Gastrocnemius medialis (tissue), 4 donors: ENCODE measurements at regions of chr1 and their contacts with region 1.

Region 1: DNA sequence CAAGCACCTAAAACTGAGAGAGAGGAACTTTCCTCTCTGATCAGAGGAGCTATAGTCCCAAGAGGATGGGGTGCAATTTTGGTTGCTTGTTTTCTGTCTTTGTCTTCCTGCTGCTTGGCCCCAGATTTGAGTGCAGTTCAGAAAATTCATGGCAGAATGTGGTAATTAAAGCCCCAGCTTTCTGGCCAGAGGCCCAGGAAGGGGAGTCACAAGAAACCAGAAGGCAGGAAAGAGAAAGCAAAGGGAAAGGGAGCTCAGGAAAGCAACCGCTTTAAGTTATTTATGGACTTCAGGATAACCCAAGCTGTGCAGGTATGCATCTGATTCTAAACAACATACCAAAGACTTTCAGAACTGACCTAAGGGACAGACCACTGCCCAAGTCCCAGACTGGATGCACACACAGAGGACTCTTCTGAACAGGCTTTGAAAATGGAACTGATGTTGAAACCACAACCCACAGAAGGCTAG is 88.8 kb downstream of the ST3GAL3 start:
- DNase-seq: no peak
- ATAC-seq: no peak
- H3K4me3 ChIP-seq: no peak overlapping the region
- H3K27ac ChIP-seq: no peak overlapping the region
- H3K4me1 ChIP-seq: no peaks in the 10 kb centered on the region
- H3K27me3 ChIP-seq: no peaks in the 10 kb centered on the region
- CTCF ChIP-seq: no peak
- POLR2A ChIP-seq: no peak

Region 2: DNA sequence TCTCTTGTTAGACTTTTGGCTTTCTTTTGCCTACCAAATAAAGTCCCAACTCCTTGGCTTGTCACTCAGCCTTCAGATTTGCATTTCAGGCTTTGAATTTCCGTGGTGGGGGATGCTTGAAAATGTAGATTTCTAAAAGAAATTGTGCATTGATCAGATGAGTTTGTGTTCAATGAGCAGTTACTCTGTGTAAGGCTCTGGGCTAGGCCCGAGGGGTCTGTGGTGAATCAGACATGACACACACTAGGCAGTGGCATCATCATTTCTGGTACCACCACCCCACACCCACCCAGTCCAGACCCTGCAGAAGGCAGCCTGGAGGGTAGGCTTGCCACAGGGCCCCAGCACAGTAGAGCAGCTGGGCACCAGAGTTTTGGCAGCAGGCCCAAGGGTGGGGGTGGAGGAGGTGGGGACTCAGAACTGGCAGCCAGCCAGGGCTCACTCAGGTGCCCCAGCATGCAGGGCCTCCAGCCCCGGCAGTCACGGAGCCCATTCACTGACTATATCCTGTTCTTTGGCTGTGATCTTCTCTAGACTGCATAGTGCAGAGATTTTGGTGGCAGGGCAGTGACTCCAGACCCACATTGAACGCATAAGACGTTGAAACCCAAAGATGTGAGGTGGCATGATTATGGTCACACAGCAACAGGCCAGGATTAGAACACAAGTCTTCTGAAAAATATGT is 40.3 kb after region 1 on chr1:
- in situ Hi-C with region 1: no loop called
- intact Hi-C with region 1: loop called (anchors 5 kb)
- DNase-seq: peak in 1 of 2 donors; percentile 36
- ATAC-seq: no peak
- H3K4me3 ChIP-seq: no peak overlapping the region
- H3K27ac ChIP-seq: no peak overlapping the region
- H3K4me1 ChIP-seq: peaks cover 23 to 27% of the 10 kb centered on the region in 2 donors
- H3K27me3 ChIP-seq: no peaks in the 10 kb centered on the region
- CTCF ChIP-seq: no peak
- POLR2A ChIP-seq: no peak